ENCODE measurements at regions of chr1 and their contacts with region 1.

Region 1: DNA sequence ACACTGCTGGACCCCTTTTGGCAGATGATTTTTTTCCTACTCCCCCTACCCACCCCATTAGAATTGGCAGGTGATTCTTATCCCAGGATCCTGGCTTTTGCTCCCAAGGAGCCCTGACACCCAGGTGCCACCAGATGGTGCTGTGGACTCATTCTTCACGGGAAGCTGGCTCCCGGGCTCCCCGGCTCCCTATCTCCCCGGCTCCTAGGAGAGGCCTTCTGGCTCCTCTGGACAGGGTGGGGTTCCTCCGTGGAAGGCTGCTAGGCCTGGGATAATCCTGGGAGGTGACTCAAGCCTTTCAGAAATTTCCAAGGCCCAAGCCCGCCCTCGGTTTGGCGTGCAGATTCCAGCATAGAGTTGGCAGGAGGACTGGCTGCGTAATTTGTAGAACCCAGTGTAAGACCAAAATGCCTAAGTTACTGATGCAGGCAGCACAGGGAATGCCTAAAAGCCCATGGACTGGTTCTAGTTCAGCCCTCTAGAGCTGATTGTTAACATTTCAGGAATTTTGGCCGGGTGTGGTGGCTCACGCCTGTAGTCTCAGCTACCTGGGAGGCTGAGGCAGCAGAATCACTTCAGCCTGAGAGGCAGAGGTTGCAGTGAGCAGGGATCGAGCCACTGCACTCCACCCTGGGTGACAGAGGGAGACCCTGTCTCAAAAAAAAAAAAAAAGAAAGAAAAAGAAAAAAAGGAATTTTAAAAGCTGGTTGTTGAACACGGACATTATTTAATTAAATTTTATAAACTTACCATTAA is 6.8 kb upstream of the BSDC1 start:
- DNase-seq: peak in 1 of 2 experiments; percentile 91
- H3K4me3 ChIP-seq: no peak overlapping the region
- H3K27ac ChIP-seq: no peak overlapping the region
- H3K4me1 ChIP-seq: no peaks in the 10 kb centered on the region; a peak in 1 of 7 replicates
- H3K27me3 ChIP-seq: no peaks in the 10 kb centered on the region
- CTCF ChIP-seq: peak; percentile 79 to 93 (median 88)
- EP300 ChIP-seq: peak in 1 of 2 experiments; percentile 24; a peak in 1 of 3 replicates
- POLR2A ChIP-seq: no peak
- RAD21 ChIP-seq: peak; percentile 96 to 99

Region 2: GRCh38 chr1:32413507-32414185 is 12.6 kb after region 1 on chr1:
- CTCF ChIA-PET with region 1: interaction called, 56 read pairs
- POLR2A ChIA-PET with region 1: interaction called, 4 read pairs
- DNase-seq: peak in 1 of 2 experiments; percentile 72
- H3K4me3 ChIP-seq: no peak overlapping the region
- H3K27ac ChIP-seq: no peak overlapping the region
- H3K4me1 ChIP-seq: no peaks in the 10 kb centered on the region
- H3K27me3 ChIP-seq: no peaks in the 10 kb centered on the region
- CTCF ChIP-seq: peak; percentile 52 to 88 (median 66)
- EP300 ChIP-seq: no peak
- POLR2A ChIP-seq: no peak
- RAD21 ChIP-seq: peak; percentile 87 to 88

Measured in H1 (cell line).